Posterior vena cava (tissue), 2 donors: ENCODE measurements at regions of chr11 and their contacts with region 1.

Region 1: GRCh38 chr11:117682800-117683199 is 114.2 kb downstream of the DSCAML1 start:
- DNase-seq: no peak

Region 2: GRCh38 chr11:117619026-117619425 is 63.8 kb before region 1 on chr11:
- intact Hi-C with region 1: no loop called
- DNase-seq: peak; percentile 43

Region 3: DNA sequence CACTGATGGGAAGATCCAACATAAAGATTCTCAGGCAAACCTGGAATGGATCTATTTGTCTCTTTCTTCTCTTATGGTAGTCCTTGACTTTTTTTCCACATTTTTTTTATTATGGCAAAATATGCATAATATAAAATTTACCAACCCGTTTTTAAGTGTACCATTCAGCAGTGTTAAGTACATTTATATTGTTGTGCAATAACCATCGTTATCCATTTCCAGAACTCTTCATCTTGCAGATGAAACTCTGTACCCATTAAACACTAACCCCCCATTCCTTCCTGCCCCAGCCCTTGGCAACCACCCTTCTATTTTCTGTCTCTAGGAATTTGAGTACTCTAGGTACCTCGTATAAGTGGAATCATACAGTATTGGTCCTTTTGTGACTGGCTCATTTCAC is 14.5 kb after region 1 on chr11:
- intact Hi-C with region 1: loop called in 1 of 2 experiments (anchors 1 kb)
- DNase-seq: no peak